Body of pancreas (tissue), 4 donors: ENCODE measurements at regions of chr16 and their contacts with region 1.

Region 1: GRCh38 chr16:3223913-3224515 is 10.9 kb downstream of the ZNF200 start:
- DNase-seq: no peak
- ATAC-seq: no peak
- H3K4me3 ChIP-seq: no peak overlapping the region
- H3K27ac ChIP-seq: no peak overlapping the region
- H3K4me1 ChIP-seq: no peaks in the 10 kb centered on the region
- H3K27me3 ChIP-seq: no peaks in the 10 kb centered on the region
- CTCF ChIP-seq: no peak
- POLR2A ChIP-seq: no peak

Region 2: DNA sequence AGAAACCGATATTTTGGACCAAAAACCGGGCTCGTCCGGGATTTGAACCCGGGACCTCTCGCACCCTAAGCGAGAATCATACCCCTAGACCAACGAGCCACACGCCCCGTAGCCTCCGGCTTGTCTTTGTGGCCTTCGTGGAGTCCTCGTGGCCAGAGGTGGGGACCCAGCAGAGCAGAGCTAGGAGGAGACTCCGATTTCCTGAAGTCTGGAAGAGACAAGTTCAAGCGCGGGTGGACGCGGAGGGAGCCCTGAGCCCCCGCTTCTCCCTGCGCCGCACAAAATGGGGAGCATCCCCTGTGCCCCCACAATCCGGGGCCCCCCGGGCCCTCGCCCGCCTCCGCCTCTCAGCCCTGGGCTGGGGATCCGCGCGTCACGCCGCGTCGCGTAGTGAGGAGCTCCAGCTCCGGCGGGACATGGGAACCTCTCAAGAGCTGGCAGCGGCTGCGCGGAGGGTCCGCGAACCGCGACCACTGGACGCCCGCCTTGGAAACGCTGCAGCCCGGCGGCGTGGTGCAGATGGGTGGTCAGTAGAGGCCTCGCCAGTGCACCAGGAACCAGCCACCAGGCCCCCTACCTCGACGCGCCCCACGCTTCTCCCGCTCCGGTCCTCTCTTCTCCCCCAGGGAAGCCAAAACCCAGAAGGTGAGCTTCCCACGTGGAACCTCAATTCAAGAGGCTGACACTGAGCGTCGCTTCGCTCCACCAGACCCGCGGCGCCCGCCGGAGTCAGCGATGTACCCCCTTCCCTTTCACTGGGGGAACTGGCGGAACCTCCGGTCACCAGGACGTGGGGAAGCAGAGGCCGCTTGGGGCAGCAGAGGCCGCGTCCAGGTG is 41.2 kb before region 1 on chr16:
- intact Hi-C with region 1: no loop called
- DNase-seq: peak; percentile 37 to 50 (median 46)
- ATAC-seq: peak; percentile 52
- H3K4me3 ChIP-seq: no peak overlapping the region
- H3K27ac ChIP-seq: no peak overlapping the region
- H3K4me1 ChIP-seq: peaks cover 16% of the 10 kb centered on the region
- H3K27me3 ChIP-seq: peaks cover 0 to 40% of the 10 kb centered on the region in 2 donors
- CTCF ChIP-seq: peak in 5 of 7 experiments; percentile 24 to 50 (median 44)
- POLR2A ChIP-seq: no peak

Region 3: DNA sequence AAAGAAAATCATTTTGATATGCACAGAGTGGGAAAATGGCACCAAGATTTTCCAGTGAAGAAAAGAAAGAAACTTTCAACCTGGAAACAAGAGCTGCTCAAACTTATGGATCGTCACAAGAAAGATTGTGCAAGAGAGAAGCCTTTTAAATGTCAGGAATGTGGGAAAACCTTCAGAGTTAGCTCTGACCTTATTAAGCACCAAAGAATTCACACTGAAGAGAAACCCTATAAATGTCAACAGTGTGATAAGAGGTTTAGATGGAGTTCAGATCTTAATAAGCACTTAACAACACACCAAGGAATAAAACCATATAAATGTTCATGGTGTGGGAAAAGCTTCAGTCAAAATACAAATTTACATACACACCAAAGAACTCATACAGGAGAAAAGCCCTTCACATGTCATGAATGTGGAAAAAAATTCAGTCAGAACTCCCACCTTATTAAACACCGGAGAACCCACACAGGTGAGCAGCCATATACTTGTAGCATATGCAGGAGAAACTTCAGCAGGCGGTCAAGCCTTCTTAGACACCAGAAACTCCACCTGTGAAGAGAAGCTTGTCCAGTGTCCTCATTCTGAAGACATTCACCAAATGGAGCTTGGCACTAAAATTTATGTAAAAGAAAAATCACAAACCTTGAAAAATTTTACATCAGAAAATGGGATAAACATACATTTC is 93.4 kb after region 1 on chr16:
- intact Hi-C with region 1: loop called (anchors 10 kb)
- DNase-seq: no peak
- ATAC-seq: no peak
- H3K4me3 ChIP-seq: no peak overlapping the region
- H3K27ac ChIP-seq: no peak overlapping the region
- H3K4me1 ChIP-seq: no peaks in the 10 kb centered on the region
- H3K27me3 ChIP-seq: no peaks in the 10 kb centered on the region
- CTCF ChIP-seq: no peak
- POLR2A ChIP-seq: no peak